CD4-positive, alpha-beta T cell (primary cell): ENCODE measurements at regions of chr6 and their contacts with region 1.

Region 1: DNA sequence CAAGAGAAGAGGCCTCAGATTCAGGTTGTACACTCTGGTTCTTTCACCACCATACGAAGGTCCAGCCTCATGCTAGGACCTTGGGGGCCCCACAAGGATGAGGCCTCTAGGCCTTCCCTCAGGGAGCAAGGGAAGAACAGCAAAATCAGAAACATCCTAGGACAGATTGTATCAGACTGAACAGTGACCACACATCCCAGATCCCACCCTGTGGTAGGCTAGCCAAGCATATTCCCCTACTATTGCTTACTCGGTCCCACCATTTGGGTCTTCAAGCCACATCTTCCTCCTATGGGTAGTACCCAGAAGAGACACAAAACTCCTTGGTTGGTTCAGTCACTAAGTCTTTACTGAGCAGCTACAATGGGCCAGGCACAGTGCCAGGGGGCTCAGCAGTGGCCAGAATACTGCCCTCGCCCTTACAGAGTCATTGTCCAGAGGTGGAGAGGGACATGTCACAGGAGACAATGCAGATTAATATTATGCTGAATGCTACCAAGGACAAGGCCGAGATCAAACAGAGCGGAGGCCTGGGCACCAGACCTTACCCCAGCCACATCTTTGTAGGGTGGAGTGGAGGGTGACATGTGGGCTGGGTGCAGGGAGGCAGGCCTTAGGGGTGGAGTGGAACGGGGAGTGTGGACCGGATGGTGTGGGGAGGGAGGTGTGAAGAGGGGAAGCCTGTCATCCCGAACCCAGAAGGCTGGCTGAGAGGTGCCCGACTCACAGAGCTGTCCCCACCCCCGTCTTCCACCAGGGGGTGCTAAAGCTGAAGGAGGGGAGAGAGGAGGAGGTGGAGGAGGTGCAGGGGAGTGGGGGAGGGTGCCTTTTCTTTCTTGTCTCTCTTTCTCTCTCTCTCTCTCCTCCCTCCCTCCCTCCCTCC is 6.8 kb upstream of the MAPK13 start:
- DNase-seq: peak; percentile 78 to 97 (median 86)
- ATAC-seq: peak; percentile 75
- H3K4me3 ChIP-seq: no peak overlapping the region
- H3K4me3 Mint-ChIP-seq: peak overlapping the region; percentile 78
- H3K27ac ChIP-seq: peak overlapping the region; percentile 43 to 71
- H3K27ac Mint-ChIP-seq: peak overlapping the region; percentile 97
- H3K4me1 ChIP-seq: peaks cover 94% of the 10 kb centered on the region
- H3K4me1 Mint-ChIP-seq: peaks cover 82% of the 10 kb centered on the region
- H3K27me3 ChIP-seq: no peaks in the 10 kb centered on the region
- H3K27me3 Mint-ChIP-seq: no peaks in the 10 kb centered on the region
- CTCF ChIP-seq: peak; percentile 63

Region 2: GRCh38 chr6:36094753-36095496 is 28.6 kb before region 1 on chr6:
- CTCF ChIA-PET with region 1: interaction called, 16 read pairs
- POLR2A ChIA-PET with region 1: interaction called, 26 read pairs
- intact Hi-C with region 1: no loop called
- DNase-seq: peak; percentile 74 to 92 (median 79)
- ATAC-seq: peak; percentile 67
- H3K4me3 ChIP-seq: no peak overlapping the region
- H3K4me3 Mint-ChIP-seq: no peak overlapping the region
- H3K27ac ChIP-seq: peak overlapping the region; percentile 4 to 33
- H3K27ac Mint-ChIP-seq: peak overlapping the region; percentile 78
- H3K4me1 ChIP-seq: peaks cover 16% of the 10 kb centered on the region
- H3K4me1 Mint-ChIP-seq: peaks cover 45% of the 10 kb centered on the region
- H3K27me3 ChIP-seq: no peaks in the 10 kb centered on the region
- H3K27me3 Mint-ChIP-seq: no peaks in the 10 kb centered on the region
- CTCF ChIP-seq: peak; percentile 99

Region 3: DNA sequence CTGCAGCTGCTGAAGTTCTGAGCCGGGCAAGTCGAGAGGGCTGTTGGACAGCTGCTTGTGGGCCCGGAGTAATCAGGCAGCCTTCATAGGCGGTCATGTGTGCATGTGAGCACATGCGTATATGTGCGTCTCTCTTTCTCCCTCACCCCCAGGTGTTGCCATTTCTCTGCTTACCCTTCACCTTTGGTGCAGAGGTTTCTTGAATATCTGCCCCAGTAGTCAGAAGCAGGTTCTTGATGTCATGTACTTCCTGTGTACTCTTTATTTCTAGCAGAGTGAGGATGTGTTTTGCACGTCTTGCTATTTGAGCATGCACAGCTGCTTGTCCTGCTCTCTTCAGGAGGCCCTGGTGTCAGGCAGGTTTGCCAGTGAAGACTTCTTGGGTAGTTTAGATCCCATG is 14.4 kb before region 1 on chr6:
- CTCF ChIA-PET with region 1: interaction called, 3 read pairs
- POLR2A ChIA-PET with region 1: interaction called, 53 read pairs
- intact Hi-C with region 1: loop called in 1 of 2 experiments (anchors 1 kb)
- DNase-seq: peak in 10 of 14 experiments; percentile 20 to 84 (median 47)
- ATAC-seq: peak; percentile 94
- H3K4me3 ChIP-seq: no peak overlapping the region
- H3K4me3 Mint-ChIP-seq: peak overlapping the region; percentile 0
- H3K27ac ChIP-seq: peak overlapping the region; percentile 56 to 58
- H3K27ac Mint-ChIP-seq: peak overlapping the region; percentile 93
- H3K4me1 ChIP-seq: peaks cover 34% of the 10 kb centered on the region
- H3K4me1 Mint-ChIP-seq: peaks cover 50% of the 10 kb centered on the region
- H3K27me3 ChIP-seq: no peaks in the 10 kb centered on the region
- H3K27me3 Mint-ChIP-seq: no peaks in the 10 kb centered on the region
- CTCF ChIP-seq: no peak

Region 4: GRCh38 chr6:36289281-36289878 is 165.9 kb after region 1 on chr6:
- CTCF ChIA-PET with region 1: no interaction called
- POLR2A ChIA-PET with region 1: no interaction called
- intact Hi-C with region 1: loop called in 1 of 2 experiments (anchors 10 kb)
- DNase-seq: no peak
- ATAC-seq: no peak
- H3K4me3 ChIP-seq: no peak overlapping the region
- H3K4me3 Mint-ChIP-seq: no peak overlapping the region
- H3K27ac ChIP-seq: no peak overlapping the region
- H3K27ac Mint-ChIP-seq: no peak overlapping the region
- H3K4me1 ChIP-seq: peaks cover 9% of the 10 kb centered on the region
- H3K4me1 Mint-ChIP-seq: peaks cover 12% of the 10 kb centered on the region
- H3K27me3 ChIP-seq: peaks cover 11 to 12% of the 10 kb centered on the region in 2 experiments
- H3K27me3 Mint-ChIP-seq: peaks cover 14% of the 10 kb centered on the region
- CTCF ChIP-seq: no peak

Region 5: GRCh38 chr6:36360241-36361054 is 236.9 kb after region 1 on chr6:
- CTCF ChIA-PET with region 1: no interaction called
- POLR2A ChIA-PET with region 1: no interaction called
- intact Hi-C with region 1: loop called in 1 of 2 experiments (anchors 2 kb)
- DNase-seq: peak; percentile 52 to 85 (median 58)
- ATAC-seq: peak; percentile 98
- H3K4me3 ChIP-seq: no peak overlapping the region
- H3K4me3 Mint-ChIP-seq: no peak overlapping the region
- H3K27ac ChIP-seq: no peak overlapping the region
- H3K27ac Mint-ChIP-seq: no peak overlapping the region
- H3K4me1 ChIP-seq: peaks cover 7% of the 10 kb centered on the region
- H3K4me1 Mint-ChIP-seq: no peaks in the 10 kb centered on the region
- H3K27me3 ChIP-seq: no peaks in the 10 kb centered on the region
- H3K27me3 Mint-ChIP-seq: no peaks in the 10 kb centered on the region
- CTCF ChIP-seq: peak; percentile 75